ENCODE measurements at regions of chr18 and their contacts with region 1.

Region 1: GRCh38 chr18:24878289-24878688 is 417.9 kb downstream of the HRH4 start:
- DNase-seq: no peak
- H3K4me3 ChIP-seq: no peak overlapping the region
- H3K27ac ChIP-seq: no peak overlapping the region
- H3K4me1 ChIP-seq: no peaks in the 10 kb centered on the region
- H3K27me3 ChIP-seq: no peaks in the 10 kb centered on the region
- CTCF ChIP-seq: peak; percentile 76

Region 2: GRCh38 chr18:25832001-25832604 is 953.8 kb after region 1 on chr18:
- intact Hi-C with region 1: loop called (anchors 5 kb)
- DNase-seq: peak; percentile 72
- H3K4me3 ChIP-seq: no peak overlapping the region
- H3K27ac ChIP-seq: no peak overlapping the region
- H3K4me1 ChIP-seq: peaks cover 9% of the 10 kb centered on the region
- H3K27me3 ChIP-seq: no peaks in the 10 kb centered on the region
- CTCF ChIP-seq: peak; percentile 85

Region 3: GRCh38 chr18:25896178-25896780 is 1018.0 kb after region 1 on chr18:
- intact Hi-C with region 1: loop called (anchors 5 kb)
- DNase-seq: no peak
- H3K4me3 ChIP-seq: no peak overlapping the region
- H3K27ac ChIP-seq: no peak overlapping the region
- H3K4me1 ChIP-seq: no peaks in the 10 kb centered on the region
- H3K27me3 ChIP-seq: no peaks in the 10 kb centered on the region
- CTCF ChIP-seq: peak; percentile 76

Measured in left ventricle myocardium inferior (tissue), 1 donor.